ENCODE measurements at regions of chr16 and their contacts with region 1.

Region 1: DNA sequence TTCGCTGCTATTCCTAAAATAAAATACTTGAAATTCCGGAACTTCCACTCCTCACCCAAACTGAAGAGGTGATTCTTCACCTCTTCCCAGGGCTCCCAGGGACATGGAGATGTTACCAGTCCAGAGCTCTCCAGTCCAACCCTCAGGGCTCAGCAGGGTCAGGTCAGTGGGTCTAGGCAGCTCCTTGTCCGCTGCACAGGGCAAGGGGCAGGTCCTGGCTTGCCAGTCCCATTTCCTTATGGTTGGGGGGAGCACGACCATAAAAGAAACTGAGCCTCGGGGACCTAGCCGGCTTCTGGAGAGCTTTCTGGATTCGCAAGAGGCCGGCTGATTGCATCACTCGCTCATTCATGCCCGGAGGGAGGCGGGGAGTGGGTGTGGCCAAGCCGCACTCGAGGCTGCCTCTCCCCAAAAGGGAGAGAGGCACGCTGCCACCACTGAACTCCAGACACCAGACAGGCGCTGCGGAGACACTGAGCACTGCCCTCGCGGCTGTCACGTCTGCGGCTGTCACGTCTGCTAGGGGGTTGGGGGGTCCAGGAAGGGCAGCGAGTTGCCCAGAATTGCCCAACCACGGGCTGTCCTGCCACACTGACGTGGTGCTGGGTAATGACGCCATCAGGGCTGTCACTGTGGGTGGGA is 15.8 kb downstream of the SLC7A5 start:
- DNase-seq: peak; percentile 92
- ATAC-seq: peak; percentile 51
- H3K4me3 Mint-ChIP-seq: peak overlapping the region; percentile 30
- H3K27ac Mint-ChIP-seq: peak overlapping the region; percentile 87
- H3K4me1 Mint-ChIP-seq: peaks cover 62% of the 10 kb centered on the region
- H3K27me3 Mint-ChIP-seq: no peaks in the 10 kb centered on the region

Region 2: DNA sequence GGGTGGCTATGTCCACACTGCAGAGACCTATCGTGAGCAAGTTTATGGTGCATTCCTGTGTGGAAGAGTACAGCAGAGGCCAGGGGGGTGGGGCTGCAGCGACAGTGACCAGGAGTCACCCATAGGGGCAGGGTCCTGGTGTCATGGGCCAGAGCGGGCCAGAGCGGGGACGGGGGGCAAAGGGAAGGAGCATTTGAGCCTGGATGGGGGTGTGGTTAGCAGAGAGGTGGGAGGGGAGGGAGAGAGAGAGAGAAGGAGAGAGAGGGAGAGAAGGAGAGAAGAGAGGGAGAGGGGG is 233.4 kb before region 1 on chr16:
- CTCF ChIA-PET with region 1: no interaction called
- DNase-seq: no peak
- ATAC-seq: no peak
- H3K4me3 Mint-ChIP-seq: no peak overlapping the region
- H3K27ac Mint-ChIP-seq: no peak overlapping the region
- H3K4me1 Mint-ChIP-seq: no peaks in the 10 kb centered on the region
- H3K27me3 Mint-ChIP-seq: no peaks in the 10 kb centered on the region

Region 3: GRCh38 chr16:87832741-87833502 is 20.6 kb before region 1 on chr16:
- CTCF ChIA-PET with region 1: interaction called, 11 read pairs
- DNase-seq: no peak
- ATAC-seq: no peak
- H3K4me3 Mint-ChIP-seq: no peak overlapping the region
- H3K27ac Mint-ChIP-seq: no peak overlapping the region
- H3K4me1 Mint-ChIP-seq: no peaks in the 10 kb centered on the region
- H3K27me3 Mint-ChIP-seq: no peaks in the 10 kb centered on the region